ENCODE measurements at regions of chr17 and their contacts with region 1.

Region 1: GRCh38 chr17:74864866-74865395 is 5.2 kb upstream of the GRIN2C start:
- DNase-seq: peak; percentile 85
- ATAC-seq: peak; percentile 73

Region 2: DNA sequence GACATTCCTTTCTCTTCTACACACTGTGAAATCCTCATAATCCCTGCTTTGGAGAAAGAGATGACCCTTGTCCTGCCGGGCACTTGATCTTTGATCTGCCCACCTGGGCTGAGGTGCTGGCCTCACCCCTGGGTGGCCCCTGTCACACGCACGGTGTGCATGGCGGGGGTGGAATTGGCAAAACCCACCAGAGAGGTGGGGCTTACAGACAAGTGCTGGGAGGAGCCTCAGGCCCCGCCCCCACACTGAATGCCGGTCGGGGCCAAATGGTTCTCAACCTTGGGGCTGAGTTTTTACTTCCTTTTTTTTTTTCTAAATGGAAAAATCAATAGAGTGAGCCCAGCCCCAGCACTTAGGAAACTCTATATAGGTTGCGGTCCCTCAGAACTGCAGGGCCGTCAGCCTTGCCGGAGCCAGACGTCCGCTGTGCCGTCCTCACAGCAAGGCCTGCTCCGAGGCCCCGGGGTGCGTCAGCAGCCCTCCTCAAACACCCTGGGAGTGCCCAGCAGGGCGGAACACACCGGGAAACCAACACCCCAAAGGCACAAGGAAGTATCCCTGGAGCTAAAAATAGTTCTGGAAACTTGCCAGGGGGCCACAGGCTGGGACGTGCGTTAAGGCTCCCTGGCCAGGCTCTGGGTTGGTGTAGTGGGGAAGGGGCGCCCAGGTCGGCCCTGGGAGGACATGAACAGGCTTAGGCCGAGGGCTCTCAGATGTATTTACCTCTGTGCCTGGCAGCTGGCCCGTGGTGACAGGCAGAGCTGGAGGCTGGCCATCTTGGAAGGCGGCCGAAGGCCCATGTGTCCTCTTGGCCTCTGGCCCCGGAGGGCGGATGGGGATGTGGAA is 422.0 kb before region 1 on chr17:
- intact Hi-C with region 1: no loop called
- DNase-seq: peak; percentile 97
- ATAC-seq: peak; percentile 84

Region 3: DNA sequence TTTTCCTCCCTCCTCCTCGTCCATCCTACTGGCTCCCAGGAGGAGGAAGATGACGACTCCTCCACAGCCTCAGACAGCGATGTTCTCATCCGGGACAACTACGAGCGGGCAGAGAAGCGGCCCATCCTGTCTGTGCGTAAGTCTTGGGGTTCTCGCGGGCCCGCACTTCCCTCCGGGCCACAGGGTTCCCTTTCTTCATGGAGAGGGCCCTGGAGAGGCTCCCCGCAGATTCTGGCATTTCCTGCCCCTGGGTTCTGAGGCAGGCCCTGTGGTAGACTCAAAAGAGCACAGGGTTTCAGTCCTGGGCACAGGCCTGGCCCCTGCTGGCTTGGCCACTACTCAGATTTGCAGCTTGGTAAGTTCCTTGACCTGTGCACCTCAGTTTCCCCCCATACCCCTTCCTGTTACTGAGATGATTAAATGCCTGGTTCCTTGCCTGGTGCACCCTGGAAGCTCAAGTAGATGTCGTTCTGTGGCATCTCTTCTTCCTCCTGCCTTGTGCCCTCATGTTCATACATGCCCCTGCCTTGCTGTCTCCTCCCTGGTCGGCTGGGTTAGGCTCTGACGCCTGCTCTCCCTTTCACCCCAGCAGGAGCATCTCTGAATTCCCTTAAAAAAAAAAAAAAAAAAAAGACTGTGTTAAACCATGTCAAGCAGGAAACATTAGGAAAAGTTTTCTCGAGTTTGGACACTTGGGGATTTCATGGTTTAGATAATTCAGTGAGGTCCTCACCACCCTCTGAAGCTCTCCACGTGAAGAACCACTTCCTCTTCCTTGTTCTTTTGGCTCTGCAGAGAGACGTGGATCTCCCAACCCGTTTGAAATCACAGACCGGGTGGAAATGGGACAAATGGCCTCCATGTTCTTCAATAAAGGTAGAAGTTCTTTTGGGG is 74.5 kb before region 1 on chr17:
- intact Hi-C with region 1: loop called (anchors 1 kb)
- DNase-seq: no peak
- ATAC-seq: no peak

Region 4: DNA sequence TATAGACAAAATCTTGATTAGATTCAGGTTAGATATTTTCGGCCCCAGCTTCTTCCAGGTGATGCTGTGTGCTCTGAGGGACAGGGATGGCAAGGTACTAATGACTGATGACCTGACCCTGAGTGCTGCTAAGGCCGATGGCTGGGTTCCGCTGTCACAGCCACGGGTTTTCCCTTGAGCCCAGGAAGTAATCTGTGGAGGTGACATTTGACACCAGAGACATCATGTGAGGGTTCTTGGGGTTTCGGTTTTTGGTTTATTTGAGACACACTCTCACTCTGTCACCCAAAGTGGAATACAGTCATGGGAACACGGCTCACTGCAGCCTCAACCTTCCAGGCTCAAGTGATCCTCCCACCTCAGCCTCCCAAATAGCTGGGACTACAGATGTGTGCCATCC is 80.6 kb after region 1 on chr17:
- intact Hi-C with region 1: no loop called
- DNase-seq: no peak
- ATAC-seq: no peak

Measured in Right ventricle myocardium superior (tissue), 1 donor.